Adrenal gland (tissue), 19 donors: ENCODE measurements at regions of chr18 and their contacts with region 1.

Region 1: GRCh38 chr18:55100817-55101457 is 141.7 kb upstream of the CCDC68 start:
- DNase-seq: no peak
- H3K4me3 ChIP-seq: no peak overlapping the region
- H3K27ac ChIP-seq: no peak overlapping the region
- H3K4me1 ChIP-seq: peaks cover 0 to 4% of the 10 kb centered on the region in 2 donors
- H3K27me3 ChIP-seq: no peaks in the 10 kb centered on the region
- CTCF ChIP-seq: no peak
- POLR2A ChIP-seq: no peak

Region 2: GRCh38 chr18:54843314-54843713 is 257.6 kb before region 1 on chr18:
- intact Hi-C with region 1: no loop called
- DNase-seq: no peak
- H3K4me3 ChIP-seq: no peak overlapping the region
- H3K27ac ChIP-seq: no peak overlapping the region
- H3K4me1 ChIP-seq: no peaks in the 10 kb centered on the region
- H3K27me3 ChIP-seq: no peaks in the 10 kb centered on the region
- CTCF ChIP-seq: no peak
- POLR2A ChIP-seq: no peak

Region 3: GRCh38 chr18:55214969-55215368 is 114.0 kb after region 1 on chr18:
- intact Hi-C with region 1: loop called in 1 of 2 experiments (anchors 10 kb)
- DNase-seq: no peak
- H3K4me3 ChIP-seq: no peak overlapping the region
- H3K27ac ChIP-seq: no peak overlapping the region
- H3K4me1 ChIP-seq: peaks cover 0 to 8% of the 10 kb centered on the region in 2 donors
- H3K27me3 ChIP-seq: no peaks in the 10 kb centered on the region
- CTCF ChIP-seq: no peak
- POLR2A ChIP-seq: no peak